ENCODE measurements at regions of chr13 and their contacts with region 1.

Region 1: DNA sequence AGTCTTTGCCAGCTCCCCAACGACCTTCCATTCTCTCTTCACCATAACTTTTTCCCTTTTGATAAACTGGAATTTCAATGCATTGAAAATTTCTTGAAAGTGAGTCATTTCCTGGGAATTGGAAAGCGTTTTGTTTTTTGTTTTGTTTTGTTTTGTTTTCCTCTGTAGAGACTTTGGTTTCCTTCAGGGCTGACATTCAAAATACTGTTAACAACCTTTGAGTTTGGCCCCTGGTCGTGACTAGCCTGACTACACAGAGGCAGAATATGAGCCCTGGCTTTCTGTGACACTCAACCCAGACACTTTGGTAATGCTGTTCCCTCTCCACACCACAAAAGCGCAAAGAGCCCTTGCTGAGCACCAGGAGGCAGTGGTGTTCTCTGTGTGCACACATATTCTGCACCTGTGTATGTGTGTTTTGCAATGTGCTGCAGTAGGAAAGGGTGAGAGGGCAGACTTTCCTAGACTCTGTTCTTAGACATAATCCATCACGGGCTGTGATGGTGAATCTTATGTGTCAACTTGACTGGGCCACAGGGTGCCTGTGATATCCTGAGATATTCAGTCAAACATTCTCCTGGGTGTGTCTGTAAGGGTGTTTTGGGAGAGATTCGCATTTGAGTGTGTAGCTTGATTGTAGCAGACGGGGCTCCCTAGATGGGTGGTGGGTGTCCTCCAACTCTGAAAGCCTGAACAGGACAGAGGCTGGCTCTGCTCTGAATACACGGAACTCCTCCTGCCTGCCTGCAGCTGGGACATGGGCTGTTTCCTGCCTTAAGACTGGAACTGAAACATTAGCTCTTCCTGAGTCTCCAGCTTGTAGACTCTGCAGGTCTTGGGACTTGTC is 29.5 kb upstream of the ANKRD10 start:
- DNase-seq: no peak
- H3K4me3 ChIP-seq: no peak overlapping the region
- H3K27ac ChIP-seq: no peak overlapping the region
- H3K4me1 ChIP-seq: no peaks in the 10 kb centered on the region
- H3K27me3 ChIP-seq: no peaks in the 10 kb centered on the region
- CTCF ChIP-seq: peak; percentile 47 to 63 (median 54)

Region 2: GRCh38 chr13:110499621-110500281 is 444.6 kb before region 1 on chr13:
- intact Hi-C with region 1: no loop called
- DNase-seq: no peak
- H3K4me3 ChIP-seq: no peak overlapping the region
- H3K27ac ChIP-seq: no peak overlapping the region
- H3K4me1 ChIP-seq: no peaks in the 10 kb centered on the region
- H3K27me3 ChIP-seq: no peaks in the 10 kb centered on the region
- CTCF ChIP-seq: no peak

Region 3: GRCh38 chr13:111049802-111050538 is 105.6 kb after region 1 on chr13:
- intact Hi-C with region 1: loop called (anchors 1 kb)
- DNase-seq: no peak
- H3K4me3 ChIP-seq: no peak overlapping the region
- H3K27ac ChIP-seq: no peak overlapping the region
- H3K4me1 ChIP-seq: peaks cover 0 to 6% of the 10 kb centered on the region in 2 donors
- H3K27me3 ChIP-seq: no peaks in the 10 kb centered on the region
- CTCF ChIP-seq: peak; percentile 14 to 61 (median 40)

Measured in ascending aorta (tissue), 2 donors.